GM12878 (cell line): ENCODE measurements at regions of chr14 and their contacts with region 1.

Region 1: DNA sequence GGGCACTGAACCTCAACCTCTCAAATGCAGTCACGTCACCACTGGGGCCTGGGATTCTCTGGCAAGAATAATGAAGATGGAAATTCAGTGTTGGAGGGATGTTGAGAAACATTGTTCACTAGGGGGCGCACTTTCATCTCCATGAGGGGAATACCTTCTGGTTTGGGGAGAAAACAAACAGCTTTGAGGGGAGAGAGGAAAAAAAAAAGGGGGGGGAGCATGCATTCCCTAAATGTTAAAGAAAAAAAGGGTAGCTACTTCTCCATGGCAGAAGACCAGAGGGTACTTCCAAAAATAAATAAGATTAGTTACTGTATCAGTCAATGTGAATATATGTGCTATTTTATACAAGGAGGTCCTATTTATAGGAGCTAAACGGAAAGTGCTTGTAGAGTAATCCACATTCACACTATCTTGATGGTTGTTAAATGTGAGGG is 5.8 kb upstream of the TBPL2 start:
- DNase-seq: no peak
- ATAC-seq: peak; percentile 72
- H3K4me3 ChIP-seq: no peak overlapping the region
- H3K27ac ChIP-seq: no peak overlapping the region
- H3K4me1 ChIP-seq: no peaks in the 10 kb centered on the region
- H3K27me3 ChIP-seq: no peaks in the 10 kb centered on the region
- CTCF ChIP-seq: peak; percentile 62 to 68 (median 62)
- EP300 ChIP-seq: no peak
- POLR2A ChIP-seq: no peak
- RAD21 ChIP-seq: peak; percentile 82

Region 2: DNA sequence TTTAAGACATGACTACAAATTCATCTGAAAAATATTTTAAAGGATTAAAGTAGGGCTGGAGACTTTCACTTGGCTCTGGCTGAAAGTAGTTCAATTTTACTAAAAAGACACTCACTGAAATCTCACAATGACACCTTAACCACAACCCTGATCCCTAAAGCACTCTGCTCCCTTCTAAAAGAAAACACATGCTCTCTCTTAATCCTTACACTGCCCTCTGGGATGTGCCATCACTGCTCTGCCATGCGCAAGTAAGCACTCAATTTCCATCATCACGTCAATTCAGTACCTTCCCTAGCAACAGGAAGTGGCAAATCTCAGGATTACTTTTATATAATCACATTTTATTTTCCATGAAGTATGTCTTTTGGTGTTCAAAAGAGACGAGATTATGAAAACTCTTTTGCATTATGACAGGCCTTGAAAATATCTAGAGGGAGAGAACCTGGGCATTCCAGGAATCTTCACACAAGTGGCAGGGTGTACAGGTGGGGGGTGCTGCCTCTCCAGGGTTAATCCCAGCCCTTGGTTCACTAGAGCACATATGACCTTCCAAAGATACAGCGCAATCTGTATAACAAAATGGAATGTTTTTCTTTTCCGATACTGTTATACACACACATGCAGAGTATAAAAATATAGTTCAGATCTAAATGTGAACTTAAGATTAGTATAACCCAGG is 41.9 kb before region 1 on chr14:
- CTCF ChIA-PET with region 1: no interaction called
- POLR2A ChIA-PET with region 1: no interaction called
- RAD21 ChIA-PET with region 1: no interaction called
- SMC1A ChIA-PET with region 1: no interaction called
- in situ Hi-C with region 1: no loop called
- intact Hi-C with region 1: no loop called
- DNase-seq: no peak
- ATAC-seq: peak; percentile 40; the same call in 2 of the 3 replicates
- H3K4me3 ChIP-seq: no peak overlapping the region
- H3K27ac ChIP-seq: no peak overlapping the region
- H3K4me1 ChIP-seq: peaks cover 5% of the 10 kb centered on the region; the same call in 1 of the 2 replicates
- H3K27me3 ChIP-seq: no peaks in the 10 kb centered on the region
- CTCF ChIP-seq: no peak
- EP300 ChIP-seq: no peak
- POLR2A ChIP-seq: no peak
- RAD21 ChIP-seq: no peak

Region 3: GRCh38 chr14:55467307-55467706 is 21.1 kb after region 1 on chr14:
- CTCF ChIA-PET with region 1: interaction called, 12 read pairs
- POLR2A ChIA-PET with region 1: no interaction called
- RAD21 ChIA-PET with region 1: no interaction called
- SMC1A ChIA-PET with region 1: interaction called, 3 read pairs
- in situ Hi-C with region 1: no loop called
- intact Hi-C with region 1: no loop called
- DNase-seq: no peak
- ATAC-seq: no peak
- H3K4me3 ChIP-seq: no peak overlapping the region
- H3K27ac ChIP-seq: no peak overlapping the region
- H3K4me1 ChIP-seq: no peaks in the 10 kb centered on the region
- H3K27me3 ChIP-seq: no peaks in the 10 kb centered on the region
- CTCF ChIP-seq: no peak
- EP300 ChIP-seq: no peak
- POLR2A ChIP-seq: no peak
- RAD21 ChIP-seq: no peak

Region 4: DNA sequence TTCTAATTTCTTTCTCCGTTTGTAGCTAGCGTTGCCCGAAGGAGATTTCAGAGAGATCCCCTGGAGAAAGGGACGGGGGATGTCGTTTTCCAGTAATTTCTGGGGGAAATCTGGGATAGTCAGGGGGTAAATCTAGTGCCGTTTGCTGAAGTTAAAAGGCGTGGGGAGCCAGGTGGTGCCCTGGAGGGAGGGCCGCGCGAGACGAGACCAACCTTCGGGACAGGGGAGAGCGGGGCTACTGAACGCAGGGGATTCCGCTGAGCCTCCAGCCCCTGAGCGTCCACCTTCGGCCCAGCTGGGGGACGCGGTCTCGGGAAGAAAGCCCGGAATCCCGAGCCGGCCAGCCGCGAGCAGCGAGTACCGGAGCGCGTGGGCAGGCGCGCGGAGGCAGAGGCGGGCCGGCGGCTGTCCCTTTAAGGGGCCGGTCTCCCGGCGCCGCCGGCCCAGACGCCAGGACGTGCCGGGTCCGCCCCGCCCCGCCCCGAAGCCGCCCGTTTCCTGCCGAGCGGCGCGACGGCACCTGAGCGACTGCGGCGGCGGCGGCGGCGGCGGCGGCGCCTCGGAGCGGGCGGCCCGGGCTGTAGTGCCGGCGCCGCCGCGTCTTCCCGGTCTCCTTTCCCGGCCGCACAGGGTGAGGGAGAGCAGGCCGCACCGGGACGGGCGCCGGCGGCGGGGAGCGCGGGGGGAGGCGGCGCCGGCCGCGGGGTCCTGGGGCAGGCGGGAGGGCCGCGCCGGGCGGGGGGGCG is 133.7 kb after region 1 on chr14 and contains the start of gene KTN1:
- CTCF ChIA-PET with region 1: interaction called, 9 read pairs
- POLR2A ChIA-PET with region 1: interaction called, 6 read pairs
- RAD21 ChIA-PET with region 1: interaction called, 8 read pairs
- SMC1A ChIA-PET with region 1: interaction called, 13 read pairs
- in situ Hi-C with region 1: no loop called
- intact Hi-C with region 1: loop called (anchors 2 kb)
- DNase-seq: no peak
- ATAC-seq: peak; percentile 86
- H3K4me3 ChIP-seq: peak within 1 kb of the TSS; percentile 91
- H3K27ac ChIP-seq: peak within 1 kb of the TSS; percentile 85
- H3K4me1 ChIP-seq: peaks cover 12% of the 10 kb centered on the region
- H3K27me3 ChIP-seq: no peaks in the 10 kb centered on the region
- CTCF ChIP-seq: no peak
- EP300 ChIP-seq: 0 out of 4 replicates have a peak, but pooled peaks of 1 of the 2 experiments have one; percentile 17
- POLR2A ChIP-seq: peak; percentile 68
- RAD21 ChIP-seq: no peak
- polyA plus RNA-seq, gene KTN1: 52.9 to 79.5 TPM

Region 5: DNA sequence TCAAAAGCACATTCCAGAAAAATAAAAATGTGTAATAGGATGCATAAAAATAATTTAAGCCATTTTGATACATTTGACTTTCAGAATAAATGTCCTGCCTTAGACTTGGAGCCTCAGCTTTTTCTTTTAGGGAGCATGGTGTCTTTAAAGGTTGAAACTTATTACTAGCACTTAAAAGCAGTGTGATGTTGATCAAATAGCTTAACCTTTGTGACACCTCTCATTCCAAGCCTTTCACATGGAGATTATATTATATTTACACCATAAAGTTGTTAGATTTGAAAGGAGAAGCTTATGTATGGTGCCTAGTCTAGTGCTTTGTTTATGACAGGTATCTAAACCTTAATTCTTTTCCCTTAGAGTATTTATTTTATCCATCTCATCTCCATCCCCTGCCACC is 195.7 kb after region 1 on chr14:
- CTCF ChIA-PET with region 1: interaction called, 13 read pairs
- POLR2A ChIA-PET with region 1: no interaction called
- RAD21 ChIA-PET with region 1: interaction called, 6 read pairs
- SMC1A ChIA-PET with region 1: interaction called, 6 read pairs
- in situ Hi-C with region 1: no loop called
- intact Hi-C with region 1: no loop called
- DNase-seq: no peak
- ATAC-seq: no peak
- H3K4me3 ChIP-seq: no peak overlapping the region
- H3K27ac ChIP-seq: no peak overlapping the region
- H3K4me1 ChIP-seq: no peaks in the 10 kb centered on the region
- H3K27me3 ChIP-seq: no peaks in the 10 kb centered on the region
- CTCF ChIP-seq: no peak
- EP300 ChIP-seq: no peak
- POLR2A ChIP-seq: no peak
- RAD21 ChIP-seq: no peak

Region 6: DNA sequence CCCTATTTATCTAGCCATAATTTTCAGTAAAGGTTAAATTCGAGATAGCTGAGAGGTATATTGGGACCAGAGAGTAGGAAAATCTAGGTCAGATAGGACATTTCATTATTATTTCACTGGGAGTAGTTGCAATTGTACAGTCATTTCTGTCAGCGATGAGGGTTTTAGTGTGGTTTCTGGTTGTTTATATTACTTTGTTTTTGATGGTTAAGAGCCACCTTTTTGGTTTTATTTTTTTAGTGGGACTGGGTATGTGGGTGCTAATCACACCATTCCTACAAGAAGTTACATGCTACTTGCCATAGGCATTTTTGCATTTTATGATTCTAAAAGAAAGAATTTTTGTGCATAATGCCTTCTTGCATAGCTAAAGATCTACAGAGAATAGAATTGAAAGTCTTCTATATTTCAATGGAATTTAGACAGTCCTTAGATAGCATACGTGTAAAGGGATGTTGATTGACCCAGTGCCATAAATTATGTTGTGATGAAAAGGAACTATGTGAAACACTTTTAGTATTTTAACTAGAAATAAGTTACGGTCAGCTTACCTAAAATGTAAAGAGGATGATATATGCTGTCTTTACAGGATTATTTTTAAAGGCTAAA is 218.9 kb after region 1 on chr14:
- CTCF ChIA-PET with region 1: interaction called, 25 read pairs
- POLR2A ChIA-PET with region 1: no interaction called
- RAD21 ChIA-PET with region 1: interaction called, 6 read pairs
- SMC1A ChIA-PET with region 1: interaction called, 7 read pairs
- in situ Hi-C with region 1: no loop called
- intact Hi-C with region 1: loop called (anchors 10 kb)
- DNase-seq: peak; percentile 3
- ATAC-seq: peak; percentile 72
- H3K4me3 ChIP-seq: no peak overlapping the region
- H3K27ac ChIP-seq: peak overlapping the region; percentile 4; the same call in 1 of the 2 replicates
- H3K4me1 ChIP-seq: peaks cover 8% of the 10 kb centered on the region
- H3K27me3 ChIP-seq: no peaks in the 10 kb centered on the region
- CTCF ChIP-seq: no peak
- EP300 ChIP-seq: no peak
- POLR2A ChIP-seq: no peak
- RAD21 ChIP-seq: no peak